ENCODE measurements at regions of chr17 and their contacts with region 1.

Region 1: GRCh38 chr17:27353461-27354050 is 59.6 kb downstream of the WSB1 start:
- H3K4me3 Mint-ChIP-seq: peak overlapping the region; percentile 94
- H3K27ac Mint-ChIP-seq: peak overlapping the region; percentile 94
- H3K4me1 Mint-ChIP-seq: peaks cover 40% of the 10 kb centered on the region
- H3K27me3 Mint-ChIP-seq: no peaks in the 10 kb centered on the region

Region 2: GRCh38 chr17:27245230-27245696 is 108.3 kb before region 1 on chr17:
- intact Hi-C with region 1: loop called (anchors 2 kb)
- H3K4me3 Mint-ChIP-seq: peak overlapping the region; percentile 70
- H3K27ac Mint-ChIP-seq: peak overlapping the region; percentile 96
- H3K4me1 Mint-ChIP-seq: peaks cover 65% of the 10 kb centered on the region
- H3K27me3 Mint-ChIP-seq: no peaks in the 10 kb centered on the region

Region 3: DNA sequence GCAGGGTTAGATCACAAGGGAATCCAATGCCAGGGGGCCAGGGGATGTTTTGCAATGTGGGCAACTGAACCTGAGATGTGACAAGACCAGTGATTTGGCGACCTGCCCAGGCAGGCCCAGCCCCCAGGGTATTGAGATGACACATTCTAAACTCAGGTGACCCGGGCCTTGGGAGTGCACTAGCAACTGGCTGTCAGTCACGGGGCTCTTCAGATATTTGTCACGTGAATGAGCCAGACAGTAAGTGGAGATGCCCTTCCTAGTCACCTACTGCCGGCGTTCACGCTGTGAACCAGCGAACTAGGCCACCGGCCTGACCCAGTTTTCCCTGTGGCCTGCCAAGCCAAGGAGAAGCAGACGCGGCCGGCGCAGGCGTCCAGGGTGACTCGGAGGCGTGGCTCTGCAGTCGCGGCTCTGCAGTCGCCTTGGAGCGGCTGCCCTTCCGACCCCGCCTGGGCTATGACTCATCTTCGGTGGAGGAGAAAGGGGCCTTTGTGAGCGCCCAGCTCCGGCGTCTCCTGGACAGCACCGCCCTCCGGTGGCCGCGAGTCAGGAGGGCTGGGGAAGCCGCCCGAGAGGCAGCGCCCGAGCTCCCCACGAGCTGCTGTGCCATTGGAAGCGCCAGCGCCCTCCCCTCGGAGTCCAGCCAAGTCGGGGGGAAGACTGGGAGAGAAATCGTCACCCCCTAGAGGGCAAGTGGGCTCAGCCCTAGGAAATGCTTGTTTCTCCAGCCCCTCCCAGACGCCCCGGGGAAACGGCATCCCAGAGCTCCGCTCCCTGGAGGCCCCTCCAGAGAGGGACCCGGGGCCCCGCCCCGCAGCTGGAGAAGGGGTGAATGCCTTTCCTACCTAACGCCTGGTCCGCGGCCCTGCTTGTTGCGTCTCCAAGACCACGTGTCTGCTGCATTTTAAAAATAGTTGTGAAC is 20.8 kb before region 1 on chr17:
- intact Hi-C with region 1: loop called (anchors 2 kb)
- H3K4me3 Mint-ChIP-seq: peak overlapping the region; percentile 73
- H3K27ac Mint-ChIP-seq: peak overlapping the region; percentile 92
- H3K4me1 Mint-ChIP-seq: peaks cover 61% of the 10 kb centered on the region
- H3K27me3 Mint-ChIP-seq: no peaks in the 10 kb centered on the region

Region 4: GRCh38 chr17:27396941-27397340 is 43.4 kb after region 1 on chr17:
- intact Hi-C with region 1: no loop called
- H3K4me3 Mint-ChIP-seq: no peak overlapping the region
- H3K27ac Mint-ChIP-seq: no peak overlapping the region
- H3K4me1 Mint-ChIP-seq: peaks cover 21% of the 10 kb centered on the region
- H3K27me3 Mint-ChIP-seq: peaks cover 8% of the 10 kb centered on the region

Region 5: DNA sequence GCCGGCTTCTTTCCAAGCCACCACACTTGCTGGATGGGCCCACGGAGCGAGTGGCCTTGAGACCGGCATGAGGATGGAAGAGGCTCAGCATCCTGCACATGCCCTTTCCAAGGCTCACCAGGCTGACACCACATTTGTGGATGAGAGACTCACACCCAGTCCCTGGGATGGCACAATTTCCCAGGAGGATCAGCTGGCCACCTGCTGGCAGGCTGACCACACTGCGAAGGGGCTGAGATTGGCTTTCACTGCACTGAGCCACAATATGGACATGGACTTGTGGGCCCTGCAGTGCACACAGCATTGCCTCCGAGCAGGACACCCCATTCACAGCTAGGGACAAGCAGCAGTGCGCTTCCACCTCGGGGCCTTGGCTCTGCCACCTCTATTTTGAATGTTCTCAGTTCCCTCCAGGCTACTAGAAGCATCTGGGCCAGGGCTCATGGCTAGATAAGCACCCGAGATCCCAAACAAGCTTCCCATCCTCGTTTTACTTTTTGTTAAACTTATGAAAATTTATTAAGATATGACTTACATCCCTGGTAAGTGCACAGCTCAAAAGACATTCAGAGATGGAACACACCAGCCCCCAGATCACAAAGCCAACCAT is 77.4 kb after region 1 on chr17:
- intact Hi-C with region 1: loop called (anchors 1 kb)
- H3K4me3 Mint-ChIP-seq: no peak overlapping the region
- H3K27ac Mint-ChIP-seq: no peak overlapping the region
- H3K4me1 Mint-ChIP-seq: no peaks in the 10 kb centered on the region
- H3K27me3 Mint-ChIP-seq: no peaks in the 10 kb centered on the region

Region 6: GRCh38 chr17:27532269-27533263 is 179.0 kb after region 1 on chr17:
- intact Hi-C with region 1: loop called (anchors 5 kb)
- H3K4me3 Mint-ChIP-seq: no peak overlapping the region
- H3K27ac Mint-ChIP-seq: peak overlapping the region; percentile 65
- H3K4me1 Mint-ChIP-seq: peaks cover 75% of the 10 kb centered on the region
- H3K27me3 Mint-ChIP-seq: no peaks in the 10 kb centered on the region

Region 7: GRCh38 chr17:27601069-27601975 is 247.8 kb after region 1 on chr17:
- intact Hi-C with region 1: loop called (anchors 2 kb)
- H3K4me3 Mint-ChIP-seq: no peak overlapping the region
- H3K27ac Mint-ChIP-seq: no peak overlapping the region
- H3K4me1 Mint-ChIP-seq: peaks cover 5% of the 10 kb centered on the region
- H3K27me3 Mint-ChIP-seq: no peaks in the 10 kb centered on the region